ENCODE measurements at regions of chr2 and their contacts with region 1.

Region 1: DNA sequence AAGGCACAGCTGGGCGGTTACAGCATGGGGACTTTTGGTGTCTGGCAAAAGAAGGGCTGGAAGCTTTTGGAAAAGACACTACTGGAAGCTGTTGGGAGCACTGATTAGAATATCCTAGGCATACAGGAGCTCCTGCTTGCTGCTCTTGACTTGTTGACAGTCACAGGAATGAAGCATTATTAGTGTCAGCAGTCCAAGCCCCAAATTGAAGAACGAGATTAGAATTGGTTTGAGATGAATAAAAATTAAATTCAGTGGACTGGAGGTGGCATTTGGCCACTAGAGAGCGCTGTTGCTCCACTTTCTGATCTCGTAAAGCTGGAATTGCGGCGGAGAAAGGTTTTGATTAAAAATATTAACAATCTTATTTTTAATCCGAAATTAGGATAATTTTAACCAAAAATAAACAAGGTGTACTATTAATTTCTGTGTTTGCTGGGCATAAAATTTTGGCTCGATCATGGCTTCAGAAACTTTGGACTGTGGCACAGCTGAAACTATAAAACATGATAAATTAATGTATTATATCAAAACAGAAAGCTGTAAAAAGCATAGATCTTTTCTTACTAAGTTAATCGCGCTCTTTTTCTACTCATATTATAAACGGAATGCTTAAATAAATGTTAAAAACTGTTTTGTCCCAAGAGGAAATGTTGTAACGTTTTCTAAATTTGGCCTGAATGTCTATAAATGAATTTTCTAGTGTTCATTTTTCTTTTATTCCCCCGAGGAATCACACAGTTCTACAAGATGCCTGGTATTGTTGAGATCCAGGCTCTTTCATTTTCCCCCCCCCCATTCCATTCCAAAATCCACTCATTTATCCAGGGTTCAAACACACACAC is 2.4 kb upstream of the HOXD8 start:
- DNase-seq: peak; percentile 29
- H3K4me3 ChIP-seq: no peak overlapping the region
- H3K27ac ChIP-seq: no peak overlapping the region
- H3K27me3 ChIP-seq: peaks cover 84% of the 10 kb centered on the region
- CTCF ChIP-seq: peak; percentile 83

Region 2: DNA sequence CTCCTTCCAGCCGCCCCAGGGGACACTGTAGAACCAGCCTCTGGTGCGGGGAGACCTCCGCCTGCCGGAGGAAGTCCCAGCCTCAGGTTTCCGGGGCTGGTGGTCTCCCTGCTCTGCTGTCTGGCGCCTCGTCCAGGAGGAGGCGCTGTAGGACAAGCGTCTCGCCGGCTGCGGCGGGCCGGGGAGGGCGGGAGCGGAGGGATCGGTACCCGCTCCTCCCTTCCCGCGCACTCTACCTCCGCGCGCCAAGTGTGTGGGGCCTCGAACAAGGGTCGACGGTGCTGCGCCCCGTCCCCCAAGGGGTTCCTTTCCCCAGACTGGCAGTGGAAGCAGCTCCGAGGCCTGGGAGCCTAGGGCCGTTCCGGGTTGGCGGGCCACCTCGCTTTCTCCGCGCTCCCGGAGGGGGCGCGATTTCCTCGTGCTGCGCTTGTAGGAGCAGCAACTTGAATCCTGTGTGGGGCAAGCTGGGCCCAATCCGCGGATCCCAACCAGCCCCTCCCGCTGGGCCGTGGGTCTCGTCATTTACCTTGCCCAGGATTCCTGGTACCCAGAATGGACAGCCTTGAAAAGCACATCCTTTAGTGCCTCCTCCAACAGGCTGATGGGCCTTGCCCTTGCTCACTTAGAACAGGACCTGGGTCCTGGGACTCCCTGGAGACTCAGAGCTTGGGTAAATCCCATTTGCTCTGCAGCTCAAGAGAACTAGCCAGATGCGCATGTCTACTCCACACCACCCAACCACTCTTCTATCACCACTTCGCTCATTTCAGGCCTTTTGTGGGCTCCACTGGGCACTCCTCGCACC is 13.6 kb after region 1 on chr2:
- CTCF ChIA-PET with region 1: interaction called, 37 read pairs
- POLR2A ChIA-PET with region 1: no interaction called
- DNase-seq: peak; percentile 4
- H3K4me3 ChIP-seq: peak overlapping the region; percentile 58
- H3K27ac ChIP-seq: no peak overlapping the region
- H3K27me3 ChIP-seq: peaks cover 78% of the 10 kb centered on the region
- CTCF ChIP-seq: peak; percentile 73

Region 3: DNA sequence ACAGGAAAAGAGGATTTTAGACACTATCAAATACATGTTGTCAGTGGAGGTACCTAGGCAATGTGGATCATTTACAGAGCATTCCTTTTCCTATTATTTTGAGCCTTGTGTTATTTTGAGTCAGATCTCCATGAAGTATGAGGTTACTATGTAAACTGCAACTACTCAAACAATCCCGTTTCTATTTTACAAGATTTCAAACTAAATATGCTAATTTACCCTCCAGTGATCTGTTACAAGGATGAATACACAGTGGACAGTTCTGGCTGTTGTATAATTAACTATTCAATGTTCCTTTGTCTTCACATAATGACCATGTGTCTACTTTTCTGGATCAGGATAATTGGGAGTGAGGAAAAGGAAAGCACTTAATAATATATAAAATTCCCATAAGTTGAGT is 65.9 kb after region 1 on chr2:
- CTCF ChIA-PET with region 1: no interaction called
- POLR2A ChIA-PET with region 1: no interaction called
- DNase-seq: no peak
- H3K4me3 ChIP-seq: no peak overlapping the region
- H3K27ac ChIP-seq: no peak overlapping the region
- H3K27me3 ChIP-seq: peaks cover 29% of the 10 kb centered on the region
- CTCF ChIP-seq: no peak

Region 4: DNA sequence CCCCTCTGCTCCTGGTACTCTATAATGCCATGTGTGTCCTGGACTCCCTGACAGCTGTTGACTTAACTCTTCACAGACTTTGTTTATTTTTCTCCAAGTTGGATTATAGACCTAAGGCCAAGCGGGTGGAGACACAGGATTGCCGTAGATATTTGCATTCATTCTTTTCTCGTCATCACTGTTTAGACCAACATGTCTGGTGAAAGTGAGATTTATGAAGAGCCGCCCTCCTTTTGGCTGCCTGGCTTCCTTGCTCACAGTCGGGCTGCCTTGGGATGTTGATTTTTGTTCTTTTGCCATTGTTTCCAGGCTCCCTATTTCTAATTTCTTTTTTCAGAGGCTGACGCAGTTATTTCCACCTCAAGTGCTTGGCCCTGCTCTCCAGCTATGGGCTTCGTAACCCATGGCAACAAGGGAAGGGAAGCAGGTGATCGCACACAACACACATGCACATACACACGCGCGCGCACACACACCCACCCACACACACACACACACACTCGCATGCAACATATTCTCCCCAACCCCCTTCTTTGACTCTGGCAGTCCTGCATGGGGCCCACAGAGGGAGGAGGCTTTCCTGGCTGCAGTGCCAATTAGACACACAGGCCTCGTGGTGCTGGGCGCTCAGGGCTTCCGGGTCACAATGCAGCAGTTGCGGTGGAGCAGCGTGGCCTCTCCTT is 438.6 kb after region 1 on chr2:
- CTCF ChIA-PET with region 1: interaction called, 12 read pairs
- POLR2A ChIA-PET with region 1: no interaction called
- DNase-seq: no peak
- H3K4me3 ChIP-seq: no peak overlapping the region
- H3K27ac ChIP-seq: peak overlapping the region; percentile 39
- H3K27me3 ChIP-seq: no peaks in the 10 kb centered on the region
- CTCF ChIP-seq: no peak

Region 5: DNA sequence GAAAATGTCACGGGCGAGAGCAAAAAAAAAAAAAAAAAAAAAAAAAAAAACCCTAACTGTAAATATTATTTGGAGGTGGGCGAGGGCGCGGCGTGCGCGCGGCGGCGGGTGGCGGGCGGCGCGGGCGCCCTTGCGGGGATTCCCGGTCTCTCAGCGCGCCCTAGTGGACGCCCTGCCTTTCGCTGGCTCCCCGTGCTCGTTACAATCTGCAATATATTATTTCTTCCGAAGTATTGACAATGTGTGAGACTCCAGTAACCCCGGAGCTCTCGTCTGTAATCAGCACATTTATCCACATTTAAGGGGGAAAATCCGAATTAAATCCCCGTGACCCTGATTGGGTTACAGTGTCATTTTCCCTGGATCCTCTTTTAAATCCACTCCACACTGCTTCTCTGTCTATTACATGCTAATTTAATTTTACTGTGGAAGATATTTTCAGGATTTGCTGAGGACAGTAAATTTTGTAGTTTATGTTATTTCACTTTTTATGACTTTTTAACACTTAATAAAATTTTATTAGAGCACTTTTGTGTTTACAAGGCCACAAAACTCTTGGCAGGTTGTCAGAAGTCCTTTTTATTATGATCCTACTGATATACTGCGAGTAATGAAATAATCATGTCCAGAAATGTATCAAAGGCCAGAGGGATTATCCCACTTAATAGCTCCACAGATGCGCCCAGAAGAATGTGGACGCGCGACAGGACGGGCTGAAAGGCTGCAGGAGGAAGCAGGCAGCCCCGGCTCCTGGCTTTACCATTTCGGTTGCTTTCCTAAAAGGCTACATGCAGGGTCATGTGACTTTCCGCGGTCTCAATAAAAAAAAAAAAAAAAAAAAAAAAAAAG is 511.2 kb after region 1 on chr2:
- CTCF ChIA-PET with region 1: interaction called, 97 read pairs
- POLR2A ChIA-PET with region 1: interaction called, 5 read pairs
- DNase-seq: peak; percentile 6
- H3K4me3 ChIP-seq: peak overlapping the region; percentile 63
- H3K27ac ChIP-seq: no peak overlapping the region
- H3K27me3 ChIP-seq: peaks cover 4% of the 10 kb centered on the region
- CTCF ChIP-seq: peak; percentile 69

Region 6: DNA sequence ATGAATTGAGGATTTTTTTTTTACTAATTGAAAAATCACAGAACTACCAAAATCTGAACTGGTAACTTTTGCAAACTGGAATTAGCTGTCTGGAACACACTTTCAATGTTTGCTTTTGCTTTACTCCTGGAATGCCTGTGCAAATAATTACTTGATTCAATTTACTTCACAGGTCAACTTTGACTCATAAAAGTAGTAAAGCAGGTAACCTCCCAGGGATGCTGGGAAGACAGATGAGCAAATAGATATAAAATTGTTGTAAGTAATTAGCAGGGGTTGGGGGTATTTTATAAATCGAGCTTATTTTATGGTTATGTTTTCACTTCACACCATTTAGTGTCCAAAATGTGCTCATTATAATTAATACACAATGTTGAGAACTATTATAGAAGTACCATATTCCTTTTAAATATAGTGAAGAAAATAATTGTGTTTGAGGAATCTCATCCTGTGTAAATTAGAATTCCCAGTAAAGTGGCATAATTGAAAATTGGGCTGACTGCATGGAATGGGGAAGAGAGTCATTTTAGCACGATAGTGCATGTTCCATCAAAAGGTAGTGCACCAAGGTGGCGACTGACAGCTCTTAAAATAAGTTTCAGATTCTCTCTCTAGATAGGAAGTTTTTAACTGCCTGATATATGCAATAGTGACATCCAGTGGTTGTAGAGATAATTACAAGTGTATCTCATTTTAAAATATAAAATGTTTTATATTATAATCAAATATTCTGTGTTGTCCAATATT is 687.3 kb after region 1 on chr2:
- CTCF ChIA-PET with region 1: interaction called, 61 read pairs
- POLR2A ChIA-PET with region 1: no interaction called
- DNase-seq: no peak
- H3K4me3 ChIP-seq: no peak overlapping the region
- H3K27ac ChIP-seq: no peak overlapping the region
- H3K27me3 ChIP-seq: no peaks in the 10 kb centered on the region
- CTCF ChIP-seq: peak; percentile 52

Region 7: GRCh38 chr2:177148477-177149154 is 1021.5 kb after region 1 on chr2:
- CTCF ChIA-PET with region 1: interaction called, 56 read pairs
- POLR2A ChIA-PET with region 1: interaction called, 5 read pairs
- DNase-seq: no peak
- H3K4me3 ChIP-seq: peak overlapping the region; percentile 61
- H3K27ac ChIP-seq: no peak overlapping the region
- H3K27me3 ChIP-seq: peaks cover 16% of the 10 kb centered on the region
- CTCF ChIP-seq: peak; percentile 97